Right ventricle myocardium superior (tissue), 1 donor: ENCODE measurements at regions of chr11 and their contacts with region 1.

Region 1: DNA sequence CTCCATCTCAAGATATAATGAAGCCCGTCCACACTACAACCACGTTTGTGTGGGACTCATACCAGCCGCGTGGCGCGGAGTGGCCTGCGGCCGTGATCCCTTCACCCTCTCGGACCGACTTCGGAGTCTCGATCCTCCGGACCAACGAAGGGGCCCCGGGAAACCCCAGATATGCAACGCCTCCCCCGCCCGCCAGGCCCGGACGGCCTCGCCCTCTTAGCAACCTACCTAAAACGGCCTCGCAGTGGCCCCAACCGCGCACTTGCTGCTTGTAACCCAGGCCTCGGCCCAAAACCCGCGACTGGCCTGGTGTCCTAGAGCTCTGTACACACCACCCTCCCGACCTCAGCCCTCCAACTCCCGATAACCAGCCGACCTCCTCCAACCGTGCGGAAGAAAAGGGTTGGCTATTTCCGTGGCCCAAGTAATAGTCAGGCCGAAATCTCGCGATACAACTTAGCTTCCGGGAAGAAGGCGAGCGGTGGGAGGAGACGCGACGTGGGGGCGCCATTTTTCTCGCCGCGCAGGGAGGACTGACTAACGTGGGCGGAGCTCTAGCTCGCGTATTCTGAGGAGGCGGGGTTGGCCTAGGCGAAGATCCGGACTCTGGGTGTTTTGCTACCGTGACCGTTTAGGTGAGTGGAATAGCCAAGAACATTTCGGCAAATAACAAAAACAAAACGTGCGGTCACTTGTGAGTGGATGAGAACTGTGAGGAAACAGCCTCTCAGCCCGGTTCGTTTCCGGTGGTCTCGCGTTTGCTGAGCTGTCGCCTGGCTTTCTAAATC is at the starts of genes C11orf54 and TAF1D:
- DNase-seq: peak; percentile 98
- ATAC-seq: peak; percentile 97
- total RNA-seq, gene C11orf54: 30.2 TPM
- total RNA-seq, gene TAF1D: 28.2 TPM

Region 2: GRCh38 chr11:93689240-93689639 is 52.0 kb before region 1 on chr11:
- intact Hi-C with region 1: loop called (anchors 10 kb)
- DNase-seq: no peak
- ATAC-seq: no peak

Region 3: GRCh38 chr11:93784152-93784934 is 43.1 kb after region 1 on chr11 and contains the start of gene MED17:
- intact Hi-C with region 1: loop called (anchors 5 kb)
- DNase-seq: peak; percentile 94
- ATAC-seq: peak; percentile 100
- total RNA-seq, gene MED17: 15.3 TPM

Region 4: DNA sequence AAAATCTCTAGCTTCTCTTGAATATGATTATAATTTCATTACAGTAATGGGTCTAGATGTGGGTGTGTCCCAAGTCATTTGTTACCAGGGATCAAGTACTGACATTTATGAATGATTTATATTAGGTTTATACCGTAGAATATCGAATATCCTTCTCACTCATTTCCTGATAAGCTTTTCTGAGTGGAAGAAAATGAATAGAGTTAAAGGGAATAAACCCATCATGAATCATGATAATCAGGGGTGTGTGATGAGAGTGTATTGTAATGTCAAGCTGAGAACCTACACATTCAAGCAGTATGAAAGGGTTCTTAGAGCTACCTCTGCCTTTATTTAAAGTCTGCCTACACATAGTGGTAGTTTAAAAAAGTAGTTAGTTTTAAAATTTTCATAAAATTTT is 60.1 kb after region 1 on chr11:
- intact Hi-C with region 1: no loop called
- DNase-seq: no peak
- ATAC-seq: no peak

Region 5: DNA sequence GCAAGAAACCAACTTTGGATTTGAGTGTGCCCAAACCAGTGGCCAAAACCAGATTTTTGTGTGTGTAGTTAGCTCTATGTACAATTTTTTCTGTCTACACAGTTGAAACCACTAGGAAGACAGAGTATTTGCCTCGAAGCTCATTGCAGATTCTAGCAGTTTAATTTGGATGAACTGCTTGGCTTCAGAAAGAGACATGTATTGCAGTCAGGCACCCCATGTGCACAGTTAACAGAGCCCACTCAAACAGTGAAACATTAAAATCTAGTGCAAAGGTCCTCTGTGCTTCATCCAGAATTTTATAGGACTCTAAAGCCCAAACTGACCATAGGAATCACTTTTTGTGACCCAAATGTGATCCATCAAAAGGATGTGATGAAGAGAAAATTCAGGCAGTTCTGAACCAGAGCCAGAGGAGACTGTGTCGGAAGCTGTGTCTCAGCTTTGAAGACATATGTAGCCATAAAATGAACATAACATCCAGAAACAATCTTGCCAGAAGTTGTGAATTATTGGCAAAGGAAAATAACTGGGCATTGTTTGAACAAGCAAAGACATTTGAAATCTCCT is 470.1 kb after region 1 on chr11:
- intact Hi-C with region 1: no loop called
- DNase-seq: no peak
- ATAC-seq: no peak